MCF 10A (cell line): ENCODE measurements at regions of chr18 and their contacts with region 1.

Region 1: DNA sequence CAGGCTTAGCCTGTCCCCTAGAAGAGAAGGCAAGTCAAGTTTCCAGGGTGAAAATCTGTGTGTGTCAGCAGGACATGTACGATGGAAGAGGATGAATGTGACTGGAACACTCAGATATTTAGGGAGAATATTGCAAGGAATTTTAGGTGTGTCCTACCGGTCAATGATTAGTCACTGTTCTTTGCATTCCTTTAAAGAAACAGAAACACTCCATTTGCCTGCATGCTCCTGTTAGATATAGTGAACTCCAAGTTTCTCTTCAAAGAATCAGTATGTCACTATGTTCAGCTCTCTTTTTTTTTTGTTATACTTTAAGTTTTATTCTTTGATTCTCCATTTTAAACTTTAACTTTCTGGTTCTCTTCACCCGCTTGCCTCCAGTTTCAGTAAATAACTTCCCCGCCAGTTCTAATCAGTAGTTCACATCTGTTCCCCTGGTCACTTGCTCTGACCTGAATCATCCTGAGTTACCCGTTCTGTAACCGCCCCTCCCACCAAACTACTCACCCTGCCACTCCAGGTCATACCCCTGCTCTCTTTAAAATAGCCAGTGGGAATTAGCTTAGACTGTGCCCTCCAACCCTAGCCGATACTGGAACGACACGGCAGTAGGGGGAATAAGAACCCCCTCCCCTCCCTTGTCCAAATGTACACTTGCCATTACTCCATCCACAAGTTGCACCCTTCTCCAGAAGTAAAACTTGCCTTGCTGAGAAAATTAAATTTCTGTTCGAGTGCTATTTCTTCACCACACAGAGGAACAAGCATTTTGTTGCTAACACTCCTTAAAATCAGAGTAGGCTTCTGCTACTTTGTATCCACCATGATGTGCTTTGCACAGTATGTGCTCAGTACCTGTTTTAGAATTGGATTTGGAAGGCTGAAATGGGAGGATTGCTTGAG is 268.4 kb downstream of the METTL4 start:
- DNase-seq: peak; percentile 69
- H3K4me3 Mint-ChIP-seq: peak overlapping the region; percentile 66
- H3K27ac Mint-ChIP-seq: peak overlapping the region; percentile 87
- H3K4me1 Mint-ChIP-seq: peaks cover 60% of the 10 kb centered on the region
- H3K27me3 Mint-ChIP-seq: no peaks in the 10 kb centered on the region
- CTCF ChIP-seq: no peak

Region 2: DNA sequence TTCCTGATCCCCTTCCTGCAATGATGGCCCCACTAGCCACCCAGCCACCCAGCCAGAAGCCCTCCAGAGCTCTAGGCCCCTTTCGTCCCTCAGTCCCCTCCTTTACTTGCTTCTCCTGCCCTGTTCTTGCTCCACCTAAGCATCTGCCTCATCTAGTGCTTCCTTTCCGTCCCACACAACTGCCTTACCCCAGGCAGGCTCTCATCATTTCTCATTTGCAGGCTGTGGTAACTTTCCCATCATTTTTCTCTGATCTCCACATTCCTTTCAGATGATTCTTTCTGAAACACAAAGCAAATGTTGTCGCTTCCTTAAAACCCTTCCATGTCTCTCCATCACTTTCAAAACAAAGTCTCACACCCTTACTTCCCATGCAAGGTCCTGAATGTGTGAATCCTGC is 191.4 kb before region 1 on chr18:
- CTCF ChIA-PET with region 1: no interaction called
- POLR2A ChIA-PET with region 1: interaction called, 5 read pairs
- intact Hi-C with region 1: loop called (anchors 10 kb)
- DNase-seq: peak; percentile 36
- H3K4me3 Mint-ChIP-seq: peak overlapping the region; percentile 3
- H3K27ac Mint-ChIP-seq: peak overlapping the region; percentile 83
- H3K4me1 Mint-ChIP-seq: peaks cover 26% of the 10 kb centered on the region
- H3K27me3 Mint-ChIP-seq: no peaks in the 10 kb centered on the region
- CTCF ChIP-seq: no peak

Region 3: DNA sequence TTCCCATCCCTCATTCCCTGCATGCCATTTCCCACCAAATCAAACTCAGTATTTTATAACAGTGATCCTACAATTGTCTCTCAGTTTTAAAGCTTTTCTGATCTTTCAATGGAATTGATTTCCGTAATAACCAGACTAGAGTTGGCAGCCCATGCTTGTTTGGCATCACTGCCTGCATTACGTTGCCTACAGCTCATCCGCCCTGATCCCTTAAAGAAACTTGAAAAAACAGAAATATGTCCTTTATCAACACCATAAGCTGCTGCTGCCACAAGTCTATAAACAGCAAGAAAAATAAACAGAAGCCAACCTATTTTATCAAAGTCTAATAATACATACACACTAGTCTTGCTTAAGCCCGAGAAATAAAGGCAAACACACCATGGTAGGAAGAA is 62.6 kb before region 1 on chr18:
- CTCF ChIA-PET with region 1: interaction called, 3 read pairs
- POLR2A ChIA-PET with region 1: interaction called, 3 read pairs
- intact Hi-C with region 1: loop called (anchors 2 kb)
- DNase-seq: no peak
- H3K4me3 Mint-ChIP-seq: peak overlapping the region; percentile 42
- H3K27ac Mint-ChIP-seq: peak overlapping the region; percentile 78
- H3K4me1 Mint-ChIP-seq: peaks cover 25% of the 10 kb centered on the region
- H3K27me3 Mint-ChIP-seq: no peaks in the 10 kb centered on the region
- CTCF ChIP-seq: no peak

Region 4: GRCh38 chr18:2425426-2426317 is 122.8 kb after region 1 on chr18:
- CTCF ChIA-PET with region 1: no interaction called
- POLR2A ChIA-PET with region 1: no interaction called
- intact Hi-C with region 1: no loop called
- DNase-seq: peak; percentile 39
- H3K4me3 Mint-ChIP-seq: no peak overlapping the region
- H3K27ac Mint-ChIP-seq: peak overlapping the region; percentile 40
- H3K4me1 Mint-ChIP-seq: peaks cover 7% of the 10 kb centered on the region
- H3K27me3 Mint-ChIP-seq: no peaks in the 10 kb centered on the region
- CTCF ChIP-seq: no peak

Region 5: GRCh38 chr18:2515908-2516625 is 213.2 kb after region 1 on chr18:
- CTCF ChIA-PET with region 1: no interaction called
- POLR2A ChIA-PET with region 1: no interaction called
- intact Hi-C with region 1: loop called (anchors 1 kb)
- DNase-seq: peak; percentile 92
- H3K4me3 Mint-ChIP-seq: peak overlapping the region; percentile 5
- H3K27ac Mint-ChIP-seq: peak overlapping the region; percentile 61
- H3K4me1 Mint-ChIP-seq: peaks cover 19% of the 10 kb centered on the region
- H3K27me3 Mint-ChIP-seq: no peaks in the 10 kb centered on the region
- CTCF ChIP-seq: no peak

Region 6: DNA sequence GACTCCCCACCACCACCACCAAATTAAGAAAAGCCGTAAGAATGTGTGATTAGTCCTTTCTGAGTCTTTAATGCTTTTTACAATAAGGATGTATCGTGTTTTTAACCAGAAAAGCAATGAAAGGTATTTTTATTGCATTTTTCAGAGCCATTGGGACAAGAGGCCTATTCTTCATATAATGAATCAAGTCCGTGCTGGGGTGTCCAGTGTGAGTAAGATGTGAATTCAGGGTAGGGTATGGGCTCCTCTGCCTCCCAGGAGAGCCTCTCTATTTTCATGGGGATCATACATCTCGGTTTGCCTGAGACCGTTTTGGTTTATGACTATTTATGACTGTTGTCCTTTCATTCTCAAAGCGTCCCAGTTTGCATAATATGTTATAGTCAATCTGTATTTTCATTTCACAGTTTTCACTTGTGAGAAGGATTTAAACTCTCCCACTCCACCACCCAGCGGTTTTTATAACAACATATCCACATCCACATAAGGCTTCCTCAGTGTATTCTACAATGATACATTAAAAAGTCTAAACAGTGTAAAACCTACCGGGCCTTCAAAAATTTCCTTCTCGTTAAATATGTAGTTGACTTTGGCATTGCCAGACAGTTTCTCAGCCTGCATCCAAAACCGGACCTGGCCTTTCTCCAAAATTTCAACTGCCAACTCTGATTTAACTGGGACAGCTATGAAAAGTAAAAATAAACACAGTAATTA is 790.9 kb after region 1 on chr18:
- CTCF ChIA-PET with region 1: no interaction called
- POLR2A ChIA-PET with region 1: no interaction called
- intact Hi-C with region 1: no loop called
- DNase-seq: no peak
- H3K4me3 Mint-ChIP-seq: no peak overlapping the region
- H3K27ac Mint-ChIP-seq: no peak overlapping the region
- H3K4me1 Mint-ChIP-seq: peaks cover 3% of the 10 kb centered on the region
- H3K27me3 Mint-ChIP-seq: no peaks in the 10 kb centered on the region
- CTCF ChIP-seq: no peak